ENCODE measurements at regions of chrX and their contacts with region 1.

Region 1: DNA sequence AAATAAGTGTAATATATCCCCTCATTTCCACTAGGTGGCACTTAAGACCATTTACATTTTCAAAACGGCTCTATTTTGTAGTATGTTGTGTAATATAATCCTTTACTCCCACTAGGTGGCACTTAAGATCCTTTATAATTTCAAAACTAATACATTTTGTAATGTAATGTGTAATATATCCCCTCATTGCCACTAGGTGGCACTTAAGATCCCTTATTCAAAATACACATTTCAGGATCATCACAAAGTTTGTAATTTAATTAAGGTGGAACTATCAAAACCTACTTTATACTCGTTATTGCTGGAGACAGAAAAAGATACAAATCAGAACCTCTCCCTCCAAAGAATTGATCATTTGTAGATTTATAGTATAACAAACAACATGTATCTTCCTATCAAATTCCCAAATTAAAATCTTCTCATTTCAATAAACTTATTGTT is 132.5 kb downstream of the ARHGAP6 start:
- DNase-seq: peak; percentile 33
- H3K4me3 ChIP-seq: no peak overlapping the region
- CTCF ChIP-seq: peak; percentile 14

Region 2: DNA sequence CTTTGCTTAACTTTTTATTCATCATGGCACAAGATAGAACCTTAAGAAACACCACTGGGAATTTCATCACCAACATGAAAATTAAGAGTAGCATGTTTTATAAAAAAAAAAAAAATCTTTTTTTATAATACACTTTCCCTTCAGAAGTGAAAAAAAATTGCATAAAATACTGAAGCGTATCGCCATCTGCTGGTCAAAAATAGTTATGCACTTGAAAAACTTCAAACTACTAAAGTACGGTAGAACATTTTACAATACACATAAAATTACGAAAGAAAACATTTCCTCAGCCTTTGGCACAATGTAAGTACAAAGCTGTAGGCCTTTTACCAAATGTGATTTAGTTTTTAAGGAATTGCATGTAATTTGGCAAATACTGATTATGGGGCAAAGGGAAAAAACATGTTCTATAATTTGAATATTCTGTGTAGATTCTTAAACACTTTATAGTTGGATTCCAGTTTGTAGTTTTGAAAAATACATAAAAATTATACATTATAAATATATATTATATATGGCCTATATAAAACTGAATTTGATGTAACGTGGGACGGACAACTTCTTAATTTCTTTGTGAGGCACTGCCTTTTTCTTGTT is 395.6 kb before region 1 on chrX:
- CTCF ChIA-PET with region 1: interaction called, 57 read pairs
- POLR2A ChIA-PET with region 1: no interaction called
- DNase-seq: no peak
- H3K4me3 ChIP-seq: no peak overlapping the region
- CTCF ChIP-seq: no peak

Region 3: DNA sequence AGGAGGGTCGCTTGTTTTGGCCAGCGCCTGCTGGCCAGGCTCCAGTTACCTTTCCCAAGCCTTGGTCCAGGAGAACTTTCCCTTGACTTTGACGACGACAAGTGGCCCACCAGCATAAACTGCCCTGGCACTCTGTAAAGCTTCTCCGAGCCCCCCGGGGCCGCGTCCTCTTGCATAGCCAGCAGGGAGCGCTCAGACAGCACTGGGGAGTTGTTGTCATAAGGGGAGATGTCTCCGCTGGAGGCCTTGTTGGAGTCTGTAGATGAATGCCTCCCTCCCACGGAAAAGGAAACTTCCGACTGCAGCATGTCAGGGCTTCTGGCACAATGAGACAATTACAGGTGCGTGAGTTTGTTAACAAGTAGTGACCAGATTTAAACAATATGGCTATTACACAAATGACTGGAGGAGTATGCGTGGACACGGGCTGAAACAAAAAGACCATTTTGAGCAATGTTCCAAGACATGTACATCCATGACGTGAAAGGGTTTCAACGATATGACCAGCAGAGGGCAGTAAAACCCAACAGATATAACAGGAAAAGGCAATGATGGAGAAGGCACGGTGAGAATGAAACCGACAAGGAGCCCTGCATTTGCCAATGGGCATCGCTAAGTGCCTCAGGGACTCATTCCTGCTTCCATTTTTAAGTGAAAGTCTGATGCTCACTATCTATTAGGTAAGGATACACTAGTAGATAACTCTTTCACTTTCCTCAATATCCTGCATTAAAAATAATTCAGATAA is 389.1 kb before region 1 on chrX:
- CTCF ChIA-PET with region 1: interaction called, 57 read pairs
- POLR2A ChIA-PET with region 1: no interaction called
- DNase-seq: no peak
- H3K4me3 ChIP-seq: no peak overlapping the region
- CTCF ChIP-seq: peak; percentile 38

Region 4: DNA sequence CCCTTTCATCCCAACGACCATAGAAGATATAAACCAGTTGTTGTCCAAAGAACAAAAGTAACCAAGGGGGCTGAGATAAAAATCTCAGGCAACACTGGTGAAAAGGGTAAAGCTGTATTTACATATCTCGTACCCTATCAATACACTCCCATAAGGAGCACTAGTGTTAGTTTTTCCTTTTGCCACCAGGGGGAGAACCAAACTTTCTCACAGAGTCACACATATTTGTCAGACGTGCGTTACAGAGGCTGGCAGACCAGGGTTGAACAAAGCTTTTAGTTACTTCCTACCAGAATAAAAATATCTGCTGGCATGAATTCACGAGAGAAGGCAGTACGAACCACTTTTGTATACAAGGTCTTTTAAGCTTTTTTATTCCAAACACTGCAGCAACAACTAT is 151.8 kb before region 1 on chrX:
- CTCF ChIA-PET with region 1: interaction called, 73 read pairs
- POLR2A ChIA-PET with region 1: no interaction called
- DNase-seq: peak; percentile 10
- H3K4me3 ChIP-seq: no peak overlapping the region
- CTCF ChIP-seq: peak; percentile 44

Region 5: GRCh38 chrX:11688201-11688600 is 155.0 kb after region 1 on chrX:
- CTCF ChIA-PET with region 1: no interaction called
- POLR2A ChIA-PET with region 1: no interaction called
- DNase-seq: no peak
- H3K4me3 ChIP-seq: no peak overlapping the region
- CTCF ChIP-seq: no peak

Region 6: DNA sequence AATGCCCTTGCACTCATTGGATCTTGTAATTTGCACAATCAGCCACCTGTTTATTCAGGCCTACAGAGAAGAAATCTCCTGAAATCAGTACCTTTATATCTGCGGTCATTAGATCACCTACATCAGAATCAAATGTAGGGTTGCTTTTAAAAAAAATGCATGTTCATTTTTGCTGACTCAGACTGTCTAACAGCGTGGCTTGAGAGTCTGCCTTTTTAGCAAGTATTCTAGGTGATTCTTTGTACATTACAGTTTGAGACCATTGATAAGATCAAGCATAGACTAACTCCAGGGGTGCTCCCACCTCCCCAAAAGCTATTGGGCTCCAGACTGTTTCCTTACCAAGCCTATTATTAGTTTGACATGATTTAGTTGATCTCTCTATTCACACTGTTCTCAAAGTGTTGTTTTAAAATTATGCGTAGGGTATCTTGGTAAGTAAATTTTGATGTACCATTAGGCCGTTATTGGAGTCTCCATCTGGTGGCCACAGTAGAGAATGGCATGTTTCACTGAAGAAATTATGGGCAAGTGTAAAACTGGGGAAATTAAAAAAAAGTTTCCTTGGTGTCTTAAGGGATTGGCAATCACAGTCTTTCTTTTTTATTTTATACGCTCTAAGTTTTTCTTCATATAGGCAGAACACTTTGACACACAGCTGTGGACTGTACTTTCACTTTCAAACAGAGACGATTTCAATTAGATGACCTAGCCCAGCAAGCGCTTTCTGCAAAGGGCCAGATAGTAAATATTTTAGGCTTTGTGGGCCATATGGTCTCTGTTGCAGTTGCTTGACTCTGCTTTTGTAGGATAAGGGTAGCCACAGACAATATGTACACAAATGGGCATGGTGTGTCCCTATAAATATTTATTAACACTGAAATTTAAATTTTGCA is 191.1 kb after region 1 on chrX:
- CTCF ChIA-PET with region 1: interaction called, 46 read pairs
- POLR2A ChIA-PET with region 1: no interaction called
- DNase-seq: no peak
- H3K4me3 ChIP-seq: no peak overlapping the region
- CTCF ChIP-seq: peak; percentile 42

Region 7: DNA sequence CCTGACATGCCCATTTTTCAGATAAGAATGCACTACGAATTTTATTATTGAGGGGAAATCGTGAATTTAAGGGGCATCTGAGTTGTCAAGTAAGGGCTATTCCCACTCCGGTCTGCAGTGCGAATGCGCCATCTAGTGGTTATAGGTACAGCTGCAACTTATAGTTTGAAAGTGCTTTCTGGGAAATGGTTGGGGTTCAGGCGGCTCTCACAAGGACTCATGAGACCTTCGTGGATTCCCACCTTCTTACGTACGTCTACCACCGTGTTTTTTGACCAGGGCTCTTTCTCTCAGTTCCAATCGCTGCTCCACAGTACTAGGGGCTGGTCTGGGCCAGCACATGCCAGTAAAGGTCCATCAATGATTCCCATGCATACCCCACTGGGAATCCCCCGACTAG is 237.1 kb after region 1 on chrX:
- CTCF ChIA-PET with region 1: interaction called, 36 read pairs
- POLR2A ChIA-PET with region 1: no interaction called
- DNase-seq: no peak
- H3K4me3 ChIP-seq: no peak overlapping the region
- CTCF ChIP-seq: peak; percentile 71